ENCODE measurements at regions of chr17 and their contacts with region 1.

Region 1: DNA sequence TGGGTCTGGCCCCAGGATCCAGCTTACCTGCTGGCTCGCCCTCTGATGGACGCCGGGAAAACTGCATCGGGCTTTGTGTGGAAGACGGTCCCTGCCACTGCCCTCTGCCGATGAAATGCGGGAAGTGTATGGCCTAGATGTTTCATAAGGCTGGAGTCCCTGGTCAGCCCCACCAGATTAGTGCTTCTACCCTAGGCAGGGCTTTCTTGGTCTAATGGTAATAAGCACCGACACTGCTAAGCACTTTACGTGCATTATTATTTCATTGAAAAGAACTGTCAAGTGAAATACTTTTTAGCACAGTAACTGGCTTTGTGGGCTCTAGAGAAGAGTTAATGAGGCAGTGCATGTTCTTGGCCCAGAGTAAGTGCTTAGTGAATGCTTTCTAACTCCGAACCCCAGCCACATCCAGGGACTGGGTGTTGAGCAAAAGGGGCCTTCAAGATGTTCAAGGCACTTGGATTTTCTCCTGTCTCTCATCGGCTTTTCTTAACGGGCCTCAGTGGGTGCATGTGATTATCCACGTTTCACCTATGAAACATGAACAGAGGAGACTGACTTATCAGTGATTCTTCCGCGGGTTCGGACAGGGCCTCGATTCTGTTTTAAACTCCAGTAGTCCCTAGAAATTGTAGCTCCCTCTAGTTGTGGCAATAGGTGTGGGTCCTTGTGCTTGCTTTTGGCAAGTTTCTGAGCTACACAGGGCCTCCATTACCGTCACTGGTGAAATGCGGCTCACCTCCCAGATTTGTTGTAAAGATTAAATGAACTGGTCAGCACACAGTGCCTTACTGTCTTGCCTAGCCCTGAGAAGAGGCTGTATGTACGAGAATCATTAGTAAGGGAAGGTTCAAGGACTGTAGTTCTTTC is 6.6 kb downstream of the TRAF4 start:
- DNase-seq: peak; percentile 88 to 96
- H3K4me3 ChIP-seq: no peak overlapping the region
- H3K4me1 ChIP-seq: peaks cover 7% of the 10 kb centered on the region; the same call in 1 of the 2 replicates
- H3K27me3 ChIP-seq: no peaks in the 10 kb centered on the region

Region 2: DNA sequence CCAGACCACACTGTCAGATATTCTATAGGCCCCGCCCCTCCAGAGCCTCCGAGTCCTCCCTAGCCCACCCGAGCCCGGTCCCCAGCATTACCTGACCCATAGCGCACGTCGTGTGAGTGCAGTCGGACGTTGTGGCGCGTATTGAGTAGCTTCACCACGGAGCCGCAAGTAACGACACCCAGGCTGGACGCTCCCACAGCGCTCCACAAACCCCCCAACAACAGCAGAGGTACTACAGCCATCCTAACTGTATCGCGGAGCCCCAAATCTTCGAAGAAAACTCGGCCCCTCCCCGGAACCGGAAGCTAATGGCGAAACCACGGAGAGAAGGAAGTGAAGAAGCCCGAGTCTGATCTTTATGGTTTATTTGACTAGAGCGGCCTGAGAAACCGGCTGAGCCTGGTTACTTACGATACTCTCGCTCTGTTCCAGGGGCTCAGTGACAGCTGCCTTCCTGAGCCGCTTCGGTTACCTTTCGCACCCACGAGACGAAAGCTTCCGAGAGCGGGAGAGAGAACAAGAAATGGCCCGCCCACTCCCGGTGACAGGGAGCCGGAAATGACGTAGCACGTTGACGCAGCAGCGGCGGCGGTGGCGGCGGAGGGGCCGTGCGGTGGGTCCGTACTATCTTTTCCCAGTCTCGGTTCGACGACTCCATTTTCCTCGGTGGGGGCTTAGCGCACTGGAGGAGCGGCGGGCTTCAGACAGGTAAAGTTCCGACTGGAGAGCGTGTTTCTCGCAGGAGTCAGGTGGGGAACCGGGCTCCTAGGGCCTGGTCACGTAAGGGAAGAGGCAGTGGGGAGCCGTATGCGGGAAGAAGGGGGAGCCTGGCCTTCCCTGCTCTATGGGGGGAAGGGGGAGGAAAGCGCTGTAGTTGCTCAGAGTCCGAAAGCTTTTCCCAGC is 88.5 kb before region 1 on chr17 and contains the starts of genes SDF2 and SUPT6H:
- in situ Hi-C with region 1: no loop called
- DNase-seq: peak; percentile 85 to 95
- H3K4me3 ChIP-seq: peak within 1 kb of the TSS; percentile 63
- H3K4me1 ChIP-seq: peaks cover 9% of the 10 kb centered on the region
- H3K27me3 ChIP-seq: no peaks in the 10 kb centered on the region

Region 3: GRCh38 chr17:28889996-28890395 is 139.6 kb after region 1 on chr17:
- in situ Hi-C with region 1: loop called (anchors 10 kb)
- DNase-seq: no peak
- H3K4me3 ChIP-seq: no peak overlapping the region
- H3K4me1 ChIP-seq: no peaks in the 10 kb centered on the region
- H3K27me3 ChIP-seq: no peaks in the 10 kb centered on the region

Region 4: DNA sequence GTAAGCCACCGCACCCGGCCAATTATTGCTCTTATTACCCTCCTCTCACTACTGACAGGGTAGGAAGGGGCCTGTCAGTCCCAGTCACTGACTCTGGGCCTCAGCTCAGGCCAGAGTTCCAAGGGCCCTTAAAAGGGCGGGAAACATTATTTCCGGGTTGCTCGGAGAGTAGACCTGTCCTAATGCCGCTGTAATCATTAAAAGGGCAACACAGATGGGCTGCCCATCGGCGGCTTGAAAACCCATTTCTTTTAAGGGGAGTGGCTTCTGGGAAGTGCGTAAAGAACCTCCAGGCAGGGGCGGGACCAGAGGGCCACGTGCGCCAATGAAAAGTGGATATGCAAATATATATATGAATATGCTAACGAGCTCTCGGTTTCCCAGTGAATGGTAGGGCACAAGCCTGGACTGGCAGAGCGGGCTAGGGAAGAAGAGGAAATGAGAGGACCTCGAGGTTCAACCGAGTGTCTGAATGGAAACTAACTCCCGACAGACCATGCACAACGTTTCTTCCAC is 319.2 kb after region 1 on chr17:
- in situ Hi-C with region 1: no loop called
- DNase-seq: no peak
- H3K4me3 ChIP-seq: no peak overlapping the region
- H3K4me1 ChIP-seq: no peaks in the 10 kb centered on the region
- H3K27me3 ChIP-seq: no peaks in the 10 kb centered on the region; the same call in 1 of the 2 replicates